MCF 10A (cell line): ENCODE measurements at regions of chr13 and their contacts with region 1.

Region 1: DNA sequence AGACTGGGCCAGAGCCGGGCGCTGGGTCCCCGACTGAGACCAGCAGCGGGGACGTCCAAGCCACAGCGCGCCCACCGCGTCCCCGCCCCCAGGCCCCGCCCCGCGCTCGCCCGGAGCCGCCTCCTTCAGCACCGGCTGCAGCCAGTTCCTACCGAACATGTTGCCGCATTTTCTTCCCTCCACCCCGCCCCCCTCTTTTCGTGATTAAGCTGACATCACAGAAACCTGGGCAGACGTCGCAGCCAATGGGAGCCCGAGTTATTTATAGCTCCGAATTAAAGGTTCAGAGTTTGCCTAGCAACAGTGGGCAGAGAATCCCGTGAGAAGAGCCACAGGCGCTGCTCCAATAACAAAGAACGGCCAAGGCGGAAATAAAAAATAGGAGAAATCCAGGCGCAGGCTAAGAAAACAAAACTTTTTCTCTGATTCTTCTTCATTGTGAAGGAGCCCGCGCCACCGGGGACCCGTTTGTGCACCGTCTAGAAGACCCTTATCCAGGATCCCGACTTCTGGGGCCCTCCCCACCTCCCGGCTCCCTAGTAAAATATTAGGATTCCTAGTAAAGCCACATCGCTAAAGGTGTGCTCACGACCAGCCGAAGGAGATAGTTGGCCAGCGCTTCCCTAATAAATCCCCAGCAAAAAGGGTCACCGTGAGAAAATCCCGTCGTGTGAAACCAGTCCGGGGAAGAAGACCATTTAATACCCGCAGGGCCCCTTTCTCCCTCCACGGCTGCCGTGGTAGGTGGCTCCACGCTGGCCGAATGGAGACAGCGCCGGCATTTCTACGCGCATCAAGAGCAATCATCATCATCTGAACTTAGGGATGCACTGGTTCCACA is 61.7 kb downstream of the SERP2 start:
- DNase-seq: peak; percentile 99
- H3K4me3 Mint-ChIP-seq: peak overlapping the region; percentile 92
- H3K27ac Mint-ChIP-seq: peak overlapping the region; percentile 96
- H3K4me1 Mint-ChIP-seq: peaks cover 41% of the 10 kb centered on the region
- H3K27me3 Mint-ChIP-seq: no peaks in the 10 kb centered on the region
- CTCF ChIP-seq: no peak

Region 2: DNA sequence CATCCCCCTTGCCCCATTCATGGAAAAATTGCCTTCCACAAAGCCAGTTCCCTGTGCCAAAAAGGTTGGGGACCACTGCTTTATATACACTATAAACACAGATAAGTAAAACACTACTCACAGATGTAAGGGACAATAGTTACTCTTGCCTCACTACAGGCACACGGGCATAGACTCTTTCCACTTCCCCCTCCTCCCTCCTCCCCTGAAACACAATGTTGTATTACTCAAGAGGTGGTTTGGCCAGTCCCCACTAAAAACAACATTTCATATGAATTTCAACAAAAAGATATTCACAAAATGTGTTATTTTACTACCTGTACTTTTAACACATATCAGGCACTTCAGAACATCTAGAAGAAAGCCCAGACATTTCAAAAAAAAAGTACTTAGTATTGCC is 1488.4 kb before region 1 on chr13:
- CTCF ChIA-PET with region 1: no interaction called
- POLR2A ChIA-PET with region 1: no interaction called
- intact Hi-C with region 1: no loop called
- DNase-seq: peak; percentile 70
- H3K4me3 Mint-ChIP-seq: no peak overlapping the region
- H3K27ac Mint-ChIP-seq: peak overlapping the region; percentile 52
- H3K4me1 Mint-ChIP-seq: peaks cover 14% of the 10 kb centered on the region
- H3K27me3 Mint-ChIP-seq: no peaks in the 10 kb centered on the region
- CTCF ChIP-seq: no peak

Region 3: DNA sequence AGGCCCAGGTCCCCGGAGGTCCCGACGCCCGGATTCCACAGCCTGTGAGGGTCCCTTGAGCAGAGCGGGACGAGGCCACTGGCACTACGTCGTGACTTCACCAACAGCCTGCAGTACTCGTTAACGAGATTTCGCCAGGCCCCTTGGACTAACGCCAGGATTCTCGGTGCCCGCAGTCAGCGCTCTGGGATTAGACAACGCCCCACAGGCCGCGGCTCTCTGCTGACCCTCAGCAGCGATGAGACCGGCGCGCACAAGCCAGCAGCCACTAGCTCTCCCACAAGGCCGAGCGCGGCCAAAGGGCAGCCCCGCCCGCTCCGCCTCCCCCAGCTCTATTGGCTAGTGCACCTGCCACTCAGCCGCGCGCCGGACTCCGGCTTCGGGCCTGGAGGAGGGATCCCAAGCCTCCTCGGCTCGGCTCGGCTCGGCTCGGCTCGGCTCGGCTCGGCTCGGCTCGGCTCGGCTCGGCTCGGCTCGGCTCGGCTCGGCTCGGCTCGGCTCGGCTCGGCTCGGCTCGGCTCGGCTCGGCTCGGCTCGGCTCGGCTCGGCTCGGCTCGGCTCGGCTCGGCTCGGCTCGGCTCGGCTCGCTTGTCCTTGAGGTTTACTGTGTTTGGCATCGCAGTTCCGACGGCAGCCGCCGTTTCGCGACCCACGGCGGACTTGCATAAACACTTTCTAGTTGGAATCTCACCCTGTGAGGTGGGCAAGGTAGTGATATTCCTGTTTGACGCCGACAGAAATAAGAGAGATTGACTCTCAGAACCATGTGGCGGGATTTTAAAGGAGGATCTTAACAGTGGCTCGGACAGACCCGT is 293.4 kb before region 1 on chr13:
- CTCF ChIA-PET with region 1: interaction called, 3 read pairs
- POLR2A ChIA-PET with region 1: interaction called, 110 read pairs
- intact Hi-C with region 1: loop called (anchors 1 kb)
- DNase-seq: peak; percentile 97
- H3K4me3 Mint-ChIP-seq: peak overlapping the region; percentile 91
- H3K27ac Mint-ChIP-seq: peak overlapping the region; percentile 100
- H3K4me1 Mint-ChIP-seq: peaks cover 14% of the 10 kb centered on the region
- H3K27me3 Mint-ChIP-seq: no peaks in the 10 kb centered on the region
- CTCF ChIP-seq: no peak

Region 4: GRCh38 chr13:44197791-44198770 is 237.3 kb before region 1 on chr13:
- CTCF ChIA-PET with region 1: no interaction called
- POLR2A ChIA-PET with region 1: interaction called, 17 read pairs
- intact Hi-C with region 1: no loop called
- DNase-seq: no peak
- H3K4me3 Mint-ChIP-seq: no peak overlapping the region
- H3K27ac Mint-ChIP-seq: no peak overlapping the region
- H3K4me1 Mint-ChIP-seq: peaks cover 31% of the 10 kb centered on the region
- H3K27me3 Mint-ChIP-seq: no peaks in the 10 kb centered on the region
- CTCF ChIP-seq: no peak

Region 5: GRCh38 chr13:44267966-44268365 is 167.4 kb before region 1 on chr13:
- CTCF ChIA-PET with region 1: interaction called, 5 read pairs
- POLR2A ChIA-PET with region 1: interaction called, 45 read pairs
- intact Hi-C with region 1: no loop called
- DNase-seq: peak; percentile 80
- H3K4me3 Mint-ChIP-seq: peak overlapping the region; percentile 50
- H3K27ac Mint-ChIP-seq: peak overlapping the region; percentile 97
- H3K4me1 Mint-ChIP-seq: peaks cover 57% of the 10 kb centered on the region
- H3K27me3 Mint-ChIP-seq: no peaks in the 10 kb centered on the region
- CTCF ChIP-seq: no peak

Region 6: DNA sequence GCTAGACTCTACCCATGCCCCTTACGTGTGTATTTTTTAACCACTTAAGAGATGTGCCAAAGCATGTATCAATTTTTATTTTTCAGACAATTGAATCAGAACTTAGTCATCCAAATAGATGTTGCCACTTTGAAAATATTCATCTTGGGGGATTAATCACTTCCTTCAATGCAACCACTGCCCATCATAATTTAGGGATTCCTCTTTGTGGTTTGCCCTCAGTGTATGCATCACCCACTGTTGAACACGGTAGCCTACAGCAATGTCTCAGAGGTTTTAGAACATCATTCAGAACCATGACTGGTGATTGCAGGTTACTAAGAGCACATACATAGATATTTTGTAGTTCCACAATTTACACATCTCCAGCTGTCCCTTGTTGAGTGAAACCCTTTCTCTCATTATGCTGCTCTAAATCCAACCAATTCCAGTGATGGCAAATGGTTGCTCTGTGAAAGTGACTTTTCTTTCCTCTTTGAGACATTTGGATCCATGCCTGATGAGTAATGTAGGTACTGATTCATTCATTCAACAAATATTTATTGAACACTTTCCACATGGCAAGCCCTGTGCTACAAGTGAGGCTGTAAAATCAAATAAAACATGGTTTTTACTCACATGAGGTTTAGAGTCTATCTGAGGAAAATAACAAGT is 122.3 kb before region 1 on chr13:
- CTCF ChIA-PET with region 1: interaction called, 15 read pairs
- POLR2A ChIA-PET with region 1: interaction called, 341 read pairs
- intact Hi-C with region 1: loop called (anchors 1 kb)
- DNase-seq: peak; percentile 94
- H3K4me3 Mint-ChIP-seq: peak overlapping the region; percentile 22
- H3K27ac Mint-ChIP-seq: peak overlapping the region; percentile 93
- H3K4me1 Mint-ChIP-seq: peaks cover 67% of the 10 kb centered on the region
- H3K27me3 Mint-ChIP-seq: no peaks in the 10 kb centered on the region
- CTCF ChIP-seq: no peak

Region 7: DNA sequence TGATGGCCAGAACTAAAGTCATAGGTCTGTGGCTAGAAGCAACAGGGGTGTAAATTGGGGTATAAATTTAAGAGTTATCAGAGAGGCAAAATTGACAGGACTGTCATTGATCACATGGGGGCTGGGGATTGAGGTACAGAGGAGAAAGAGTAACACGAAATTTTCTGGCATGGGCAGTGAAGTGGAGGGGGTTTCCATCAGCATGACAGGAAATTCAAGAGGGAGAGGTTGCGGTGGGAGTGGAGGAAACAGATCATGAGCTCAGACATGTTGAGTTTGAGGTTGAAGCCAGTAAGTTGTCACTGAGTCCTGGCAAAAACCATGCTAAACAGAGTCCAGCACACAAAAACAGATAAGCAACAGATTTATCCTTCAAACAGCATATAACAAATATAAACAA is 332.9 kb after region 1 on chr13:
- CTCF ChIA-PET with region 1: no interaction called
- POLR2A ChIA-PET with region 1: no interaction called
- intact Hi-C with region 1: no loop called
- DNase-seq: no peak
- H3K4me3 Mint-ChIP-seq: no peak overlapping the region
- H3K27ac Mint-ChIP-seq: no peak overlapping the region
- H3K4me1 Mint-ChIP-seq: peaks cover 28% of the 10 kb centered on the region
- H3K27me3 Mint-ChIP-seq: no peaks in the 10 kb centered on the region
- CTCF ChIP-seq: no peak

Region 8: DNA sequence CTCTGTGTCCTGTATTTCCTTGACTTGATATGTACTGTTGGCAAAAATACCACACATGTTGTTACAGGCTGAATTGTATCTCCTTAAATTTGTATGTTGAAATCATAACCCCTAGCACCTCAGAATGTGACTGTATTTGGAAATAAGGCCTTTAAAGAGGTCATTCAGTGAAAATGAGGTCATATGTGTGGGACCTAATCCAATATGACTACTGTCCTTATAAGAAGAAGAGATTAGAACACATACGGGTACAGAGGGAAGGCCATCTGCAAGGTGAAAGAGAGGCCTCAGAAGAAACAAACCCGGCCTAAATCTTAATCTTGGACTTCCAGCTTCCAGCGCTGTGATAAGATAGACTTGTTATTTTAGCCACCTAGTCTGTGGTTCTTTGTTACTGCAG is 351.4 kb after region 1 on chr13:
- CTCF ChIA-PET with region 1: no interaction called
- POLR2A ChIA-PET with region 1: no interaction called
- intact Hi-C with region 1: no loop called
- DNase-seq: no peak
- H3K4me3 Mint-ChIP-seq: no peak overlapping the region
- H3K27ac Mint-ChIP-seq: no peak overlapping the region
- H3K4me1 Mint-ChIP-seq: peaks cover 5% of the 10 kb centered on the region
- H3K27me3 Mint-ChIP-seq: no peaks in the 10 kb centered on the region
- CTCF ChIP-seq: no peak